Heart left ventricle (tissue), 16 donors: ENCODE measurements at regions of chr19 and their contacts with region 1.

Region 1: GRCh38 chr19:43651758-43652545 is 12.3 kb upstream of the CADM4 start:
- DNase-seq: peak in 4 of 5 donors; percentile 44 to 62 (median 47)
- ATAC-seq: peak in 3 of 4 donors; percentile 67 to 82 (median 80)
- H3K4me3 ChIP-seq: peak overlapping the region in 1 of 12 donors; percentile 25
- H3K27ac ChIP-seq: no peak overlapping the region
- H3K4me1 ChIP-seq: peaks cover 0 to 4% (median 0%) of the 10 kb centered on the region in 12 donors
- H3K27me3 ChIP-seq: no peaks in the 10 kb centered on the region
- CTCF ChIP-seq: peak; percentile 59 to 81 (median 76)
- POLR2A ChIP-seq: no peak

Region 2: GRCh38 chr19:43532962-43533545 is 118.9 kb before region 1 on chr19 and contains the start of gene ZNF575:
- intact Hi-C with region 1: loop called in 4 of 10 experiments (anchors 2 to 5 kb)
- DNase-seq: peak; percentile 92 to 94 (median 94)
- ATAC-seq: peak; percentile 57 to 81 (median 74)
- H3K4me3 ChIP-seq: peak within 1 kb of the TSS; percentile 35 to 72 (median 60)
- H3K27ac ChIP-seq: peak within 1 kb of the TSS; percentile 58 to 95 (median 88)
- H3K4me1 ChIP-seq: peaks cover 0 to 26% (median 12%) of the 10 kb centered on the region in 12 donors
- H3K27me3 ChIP-seq: no peaks in the 10 kb centered on the region
- CTCF ChIP-seq: peak in 1 of 12 donors; percentile 12
- POLR2A ChIP-seq: no peak
- total RNA-seq, gene ZNF575: 0.58 to 1.9 (median 1.3) TPM in 7 of 9 donors, not detected in the others

Region 3: DNA sequence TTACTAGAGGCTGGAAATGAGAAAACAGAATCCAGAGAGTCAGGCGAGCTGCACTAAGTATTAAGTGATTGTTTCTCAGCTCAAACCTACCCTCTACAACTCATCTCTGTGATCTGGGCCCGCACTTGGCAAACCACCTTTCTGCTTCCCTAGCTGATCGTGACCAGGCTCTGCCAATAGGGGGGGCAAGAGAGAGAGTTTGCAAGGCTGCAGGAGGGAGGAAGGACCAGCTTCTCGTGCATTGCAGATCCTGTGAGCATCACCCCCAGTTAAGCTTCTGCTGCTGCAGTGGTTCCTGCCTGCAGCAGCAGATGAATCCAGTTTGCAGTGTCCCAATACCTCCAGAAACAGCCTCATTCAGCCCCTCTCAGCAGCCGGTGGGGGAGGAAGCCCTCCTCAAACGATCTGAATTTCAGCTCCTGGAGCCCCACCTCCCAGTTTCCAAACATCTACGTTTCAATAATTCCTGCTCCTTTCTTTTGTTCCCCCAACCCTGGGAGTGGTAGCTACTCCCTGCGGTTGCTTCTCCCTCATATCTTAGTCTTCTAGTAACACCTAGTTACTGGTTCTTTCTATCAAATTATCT is 96.7 kb before region 1 on chr19:
- intact Hi-C with region 1: loop called in 8 of 10 experiments (anchors 5 to 10 kb)
- DNase-seq: peak in 4 of 5 donors; percentile 53 to 67 (median 58)
- ATAC-seq: peak in 3 of 4 donors; percentile 38 to 58 (median 50)
- H3K4me3 ChIP-seq: no peak overlapping the region
- H3K27ac ChIP-seq: no peak overlapping the region
- H3K4me1 ChIP-seq: no peaks in the 10 kb centered on the region
- H3K27me3 ChIP-seq: no peaks in the 10 kb centered on the region
- CTCF ChIP-seq: peak; percentile 45 to 70 (median 56)
- POLR2A ChIP-seq: no peak

Region 4: DNA sequence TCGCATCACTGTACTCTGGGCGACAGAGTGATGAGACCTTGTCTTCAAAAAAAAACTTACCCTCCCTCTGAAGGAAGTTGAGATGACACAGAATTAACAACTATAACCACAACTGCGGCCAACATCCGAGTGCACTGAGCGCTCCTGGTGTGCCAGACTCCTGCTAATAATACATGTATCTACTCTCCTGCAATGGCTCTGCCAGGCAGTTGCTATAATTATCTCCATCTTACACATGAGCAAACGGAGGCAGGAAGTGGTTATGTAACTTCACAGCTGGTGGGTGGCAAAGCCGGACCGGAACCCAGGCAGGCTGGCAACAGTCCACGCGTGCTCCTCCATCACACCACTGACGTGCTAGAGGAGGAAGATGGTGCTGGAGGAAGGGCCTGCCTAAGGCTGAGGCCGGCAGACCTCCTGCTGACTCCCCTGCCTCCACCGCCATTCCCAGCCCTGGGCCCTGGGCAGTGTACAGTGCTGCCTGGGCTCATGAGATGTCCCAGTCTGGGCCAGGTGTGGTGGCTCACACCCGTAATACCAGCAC is 89.2 kb before region 1 on chr19:
- intact Hi-C with region 1: loop called in 5 of 10 experiments (anchors 5 to 10 kb)
- DNase-seq: peak; percentile 84 to 90 (median 87)
- ATAC-seq: peak; percentile 93 to 97 (median 96)
- H3K4me3 ChIP-seq: peak overlapping the region in 1 of 12 donors; percentile 25
- H3K27ac ChIP-seq: peak overlapping the region in 10 of 12 donors; percentile 50 to 90 (median 72)
- H3K4me1 ChIP-seq: peaks cover 0 to 30% (median 11%) of the 10 kb centered on the region in 12 donors
- H3K27me3 ChIP-seq: no peaks in the 10 kb centered on the region
- CTCF ChIP-seq: no peak
- POLR2A ChIP-seq: no peak